Breast epithelium (tissue), 4 donors: ENCODE measurements at regions of chr20 and their contacts with region 1.

Region 1: GRCh38 chr20:43337036-43337435 is 120.7 kb upstream of the SRSF6 start:
- DNase-seq: no peak
- H3K4me3 ChIP-seq: no peak overlapping the region
- H3K27ac ChIP-seq: no peak overlapping the region
- H3K4me1 ChIP-seq: no peaks in the 10 kb centered on the region
- H3K27me3 ChIP-seq: no peaks in the 10 kb centered on the region
- CTCF ChIP-seq: no peak
- POLR2A ChIP-seq: no peak

Region 2: GRCh38 chr20:43358811-43359210 is 21.8 kb after region 1 on chr20:
- intact Hi-C with region 1: loop called (anchors 1 kb)
- DNase-seq: no peak
- H3K4me3 ChIP-seq: no peak overlapping the region
- H3K27ac ChIP-seq: no peak overlapping the region
- H3K4me1 ChIP-seq: no peaks in the 10 kb centered on the region
- H3K27me3 ChIP-seq: no peaks in the 10 kb centered on the region
- CTCF ChIP-seq: no peak
- POLR2A ChIP-seq: no peak